ENCODE measurements at regions of chr17 and their contacts with region 1.

Region 1: DNA sequence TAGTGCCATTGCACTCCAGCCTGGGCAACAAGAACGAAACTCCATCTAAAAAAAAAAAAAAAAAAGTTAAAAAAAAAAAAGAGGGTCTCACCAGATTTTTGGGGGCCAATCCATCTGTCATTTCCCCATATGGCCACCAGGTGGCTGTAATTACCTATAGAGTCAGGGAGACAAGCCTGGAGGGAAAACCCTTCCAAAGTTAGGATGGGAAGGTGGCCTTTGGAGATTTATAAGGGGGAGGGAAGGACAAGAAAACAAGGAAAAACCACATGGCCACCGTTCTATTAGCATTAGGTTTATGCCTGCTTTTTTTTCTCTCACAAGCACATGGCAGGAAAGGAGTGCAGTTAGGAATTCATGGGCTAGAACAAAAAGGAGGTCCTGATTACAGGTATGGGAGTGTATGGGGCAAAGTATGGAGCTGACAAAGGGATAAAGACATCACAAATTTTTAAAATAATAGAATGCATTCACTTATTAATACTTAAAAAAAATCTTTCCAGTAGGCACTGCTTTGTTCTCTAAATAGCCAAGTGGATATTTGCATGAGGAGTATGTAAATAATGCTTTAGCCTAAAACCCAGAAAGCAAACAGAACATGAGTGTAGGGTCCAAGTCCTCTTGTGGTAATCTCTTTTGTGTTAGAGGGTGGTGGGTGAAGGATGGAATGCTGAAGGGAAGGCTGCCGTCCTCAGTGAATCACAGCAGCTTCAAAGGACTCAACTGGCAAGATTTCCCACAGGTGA is 5.1 kb downstream of the CYB5D1 start:
- DNase-seq: peak in 1 of 4 donors; percentile 69
- ATAC-seq: peak; percentile 35
- H3K4me3 ChIP-seq: no peak overlapping the region
- H3K27ac ChIP-seq: no peak overlapping the region
- H3K4me1 ChIP-seq: peaks cover 10 to 30% of the 10 kb centered on the region in 2 donors
- H3K27me3 ChIP-seq: no peaks in the 10 kb centered on the region
- CTCF ChIP-seq: peak; percentile 77 to 82

Region 2: GRCh38 chr17:7786866-7787265 is 76.0 kb before region 1 on chr17:
- intact Hi-C with region 1: no loop called
- DNase-seq: no peak
- ATAC-seq: no peak
- H3K4me3 ChIP-seq: no peak overlapping the region
- H3K27ac ChIP-seq: no peak overlapping the region
- H3K4me1 ChIP-seq: no peaks in the 10 kb centered on the region
- H3K27me3 ChIP-seq: peaks cover 0 to 12% of the 10 kb centered on the region in 2 donors
- CTCF ChIP-seq: no peak

Region 3: DNA sequence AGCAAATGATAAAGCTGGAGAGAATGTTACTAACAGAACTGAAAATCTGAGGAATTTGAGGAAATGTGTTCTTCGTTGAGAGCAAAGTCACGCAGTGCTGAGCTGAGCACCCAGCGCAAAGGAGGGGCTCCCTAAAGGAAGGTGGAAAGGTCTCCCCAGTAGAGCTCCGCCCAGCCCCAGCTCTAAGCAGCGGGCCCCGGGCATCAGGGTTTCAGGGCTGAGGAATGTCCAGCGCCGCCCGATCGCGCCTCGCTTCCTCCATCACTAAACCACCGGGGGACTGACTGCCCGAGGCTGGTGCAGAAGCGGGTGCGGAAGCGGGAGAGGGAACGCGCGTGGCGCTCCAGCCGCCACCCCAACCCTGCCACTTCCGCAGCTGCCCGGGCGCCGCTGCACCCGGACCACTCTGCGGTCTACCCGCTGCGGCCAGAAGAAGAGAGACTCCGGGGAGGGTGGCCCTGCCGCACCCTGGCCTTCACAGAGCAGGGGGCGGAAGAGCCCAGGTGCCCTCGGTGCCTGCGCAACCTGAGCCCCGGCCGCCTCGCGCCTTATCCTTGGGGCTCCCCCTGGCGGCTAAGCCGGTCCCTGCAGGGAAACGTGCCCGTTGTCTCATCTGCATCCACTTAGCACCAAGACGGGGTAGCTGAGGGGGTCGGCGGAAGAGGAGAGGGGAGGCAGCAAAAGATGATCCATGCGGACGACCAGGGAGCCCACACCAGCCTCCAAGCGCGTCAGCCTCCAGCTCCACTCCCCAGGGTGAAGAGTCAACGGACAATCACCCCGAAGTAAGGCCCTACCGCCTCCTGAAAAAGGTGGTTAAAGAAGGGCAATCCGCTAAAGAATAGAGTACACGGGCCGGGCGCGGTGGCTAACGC is 127.2 kb after region 1 on chr17:
- intact Hi-C with region 1: loop called in 1 of 2 experiments (anchors 5 kb)
- DNase-seq: peak; percentile 75 to 98 (median 83)
- ATAC-seq: peak; percentile 94
- H3K4me3 ChIP-seq: peak overlapping the region; percentile 49 to 56
- H3K27ac ChIP-seq: peak overlapping the region; percentile 58 to 88
- H3K4me1 ChIP-seq: peaks cover 0 to 21% of the 10 kb centered on the region in 2 donors
- H3K27me3 ChIP-seq: no peaks in the 10 kb centered on the region
- CTCF ChIP-seq: peak; percentile 86 to 98

Region 4: GRCh38 chr17:8005960-8006730 is 143.3 kb after region 1 on chr17:
- intact Hi-C with region 1: no loop called
- DNase-seq: peak in 1 of 4 donors; percentile 70
- ATAC-seq: no peak
- H3K4me3 ChIP-seq: no peak overlapping the region
- H3K27ac ChIP-seq: no peak overlapping the region
- H3K4me1 ChIP-seq: peaks cover 0 to 16% of the 10 kb centered on the region in 2 donors
- H3K27me3 ChIP-seq: peaks cover 20 to 56% of the 10 kb centered on the region in 2 donors
- CTCF ChIP-seq: no peak

Region 5: GRCh38 chr17:8079291-8080207 is 216.7 kb after region 1 on chr17:
- intact Hi-C with region 1: no loop called
- DNase-seq: peak; percentile 67 to 96 (median 78)
- ATAC-seq: peak; percentile 94
- H3K4me3 ChIP-seq: peak overlapping the region; percentile 21 to 24
- H3K27ac ChIP-seq: no peak overlapping the region
- H3K4me1 ChIP-seq: peaks cover 13 to 14% of the 10 kb centered on the region in 2 donors
- H3K27me3 ChIP-seq: peaks cover 5 to 99% of the 10 kb centered on the region in 2 donors
- CTCF ChIP-seq: peak; percentile 83 to 87